ENCODE measurements at regions of chr1 and their contacts with region 1.

Region 1: DNA sequence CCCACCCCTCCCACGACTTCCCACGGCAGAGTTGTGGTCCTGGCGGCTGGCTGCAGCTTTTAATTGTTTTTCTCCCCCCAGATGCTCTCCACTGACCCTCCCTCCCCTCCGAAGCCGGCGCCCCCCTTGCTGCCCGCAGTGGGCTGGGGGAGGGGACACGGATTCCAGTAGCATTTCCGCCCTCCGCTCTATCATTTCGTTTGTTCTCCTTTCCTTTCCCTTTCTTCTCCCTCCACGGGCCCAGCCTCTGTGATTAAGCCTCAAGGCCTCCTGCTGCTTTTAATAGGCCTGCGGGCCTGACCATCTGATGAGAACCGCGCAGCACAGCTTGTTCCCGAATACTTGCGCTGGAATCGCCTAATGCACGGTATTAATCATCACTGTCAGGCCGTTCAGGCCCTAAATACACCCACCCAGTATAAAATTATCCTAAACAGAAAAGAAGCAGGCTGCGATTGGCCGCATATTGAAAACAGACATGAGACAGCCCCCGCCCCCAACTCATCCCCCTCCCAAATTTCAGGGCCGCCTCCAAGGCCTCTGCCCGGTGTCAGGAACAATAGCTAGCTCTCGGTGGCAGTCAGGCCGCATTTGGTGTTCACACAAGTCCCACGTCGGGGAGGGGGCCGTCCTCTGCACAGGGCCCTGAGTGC is 102.0 kb upstream of the ARHGEF16 start:
- DNase-seq: peak; percentile 71 to 95
- H3K4me3 ChIP-seq: peak overlapping the region; percentile 36 to 40
- H3K27ac ChIP-seq: peak overlapping the region; percentile 89 to 98
- H3K4me1 ChIP-seq: peaks cover 70 to 95% of the 10 kb centered on the region in 2 donors
- H3K27me3 ChIP-seq: no peaks in the 10 kb centered on the region
- CTCF ChIP-seq: no peak

Region 2: DNA sequence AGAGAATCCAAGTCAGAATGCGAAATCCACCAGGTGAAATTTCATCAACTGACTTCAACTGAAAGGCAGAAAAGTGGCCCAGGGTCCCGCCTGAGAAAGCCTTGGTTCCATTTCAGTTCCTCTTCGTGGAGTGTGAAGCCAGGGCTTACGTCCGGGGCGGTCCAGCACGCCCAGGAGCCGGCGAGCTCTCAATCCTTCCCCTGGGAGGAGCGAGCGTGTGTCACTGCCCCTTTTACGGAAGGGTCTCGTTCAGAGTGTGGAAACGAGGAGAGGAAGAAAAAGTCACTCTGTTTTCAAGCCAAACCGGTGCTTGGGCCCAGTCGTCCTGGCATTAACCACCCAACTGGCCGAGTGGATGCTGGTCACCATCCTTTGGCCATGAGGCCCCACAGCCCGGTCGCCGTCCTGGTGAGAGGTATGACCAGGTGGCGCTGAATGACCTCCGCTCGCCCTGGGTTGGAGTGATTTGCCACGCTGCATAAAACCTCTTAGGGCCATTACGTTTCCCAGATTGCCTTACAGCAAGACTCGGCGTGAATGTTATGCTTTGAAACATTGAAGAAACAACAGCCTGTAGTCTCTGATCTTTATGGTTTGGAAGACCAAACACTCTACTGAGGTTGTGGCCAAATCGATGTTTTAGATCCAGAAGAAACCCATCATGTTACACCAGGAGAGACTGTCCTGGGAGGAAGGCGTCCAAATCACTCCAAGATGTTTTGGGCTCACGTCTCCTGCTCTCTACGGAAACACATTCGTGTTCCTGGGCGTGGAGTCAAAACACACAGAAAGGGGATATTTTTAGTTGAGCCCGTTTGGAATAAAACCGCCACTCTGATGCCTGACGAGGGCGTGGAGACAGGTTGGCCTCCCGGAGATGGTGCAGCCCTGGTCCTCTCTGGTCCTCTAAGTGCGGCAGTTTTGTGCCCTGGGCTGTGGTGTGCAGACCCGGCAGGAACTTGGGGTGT is 424.7 kb before region 1 on chr1:
- intact Hi-C with region 1: loop called (anchors 5 kb)
- DNase-seq: peak; percentile 65 to 87
- H3K4me3 ChIP-seq: peak overlapping the region in 1 of 2 donors; percentile 45
- H3K27ac ChIP-seq: peak overlapping the region; percentile 92 to 95
- H3K4me1 ChIP-seq: peaks cover 12 to 34% of the 10 kb centered on the region in 2 donors
- H3K27me3 ChIP-seq: no peaks in the 10 kb centered on the region
- CTCF ChIP-seq: no peak

Region 3: DNA sequence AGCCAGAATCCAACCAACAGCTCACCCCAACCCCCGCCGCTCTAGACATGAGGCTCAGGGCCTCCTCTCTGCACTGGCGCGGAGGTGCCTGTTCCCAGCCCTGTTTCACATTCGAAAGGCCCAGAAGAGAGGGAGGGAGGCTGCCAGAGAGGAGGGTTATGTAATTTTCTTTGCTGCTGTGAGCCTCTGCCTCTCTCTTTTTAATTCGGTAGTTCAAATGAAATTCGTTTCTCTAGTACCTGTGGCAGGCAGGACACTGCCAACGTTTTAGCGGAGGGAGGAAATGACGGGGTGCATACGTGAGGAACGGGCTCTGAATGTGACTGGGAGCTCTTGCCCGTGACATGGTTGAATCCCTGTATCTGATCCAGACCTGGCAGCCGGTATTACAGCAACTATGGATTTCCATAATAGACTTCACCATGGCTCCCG is 274.0 kb before region 1 on chr1:
- intact Hi-C with region 1: no loop called
- DNase-seq: no peak
- H3K4me3 ChIP-seq: peak overlapping the region; percentile 35 to 37
- H3K27ac ChIP-seq: peak overlapping the region; percentile 99 to 100
- H3K4me1 ChIP-seq: peaks cover 36 to 72% of the 10 kb centered on the region in 2 donors
- H3K27me3 ChIP-seq: no peaks in the 10 kb centered on the region
- CTCF ChIP-seq: no peak

Region 4: DNA sequence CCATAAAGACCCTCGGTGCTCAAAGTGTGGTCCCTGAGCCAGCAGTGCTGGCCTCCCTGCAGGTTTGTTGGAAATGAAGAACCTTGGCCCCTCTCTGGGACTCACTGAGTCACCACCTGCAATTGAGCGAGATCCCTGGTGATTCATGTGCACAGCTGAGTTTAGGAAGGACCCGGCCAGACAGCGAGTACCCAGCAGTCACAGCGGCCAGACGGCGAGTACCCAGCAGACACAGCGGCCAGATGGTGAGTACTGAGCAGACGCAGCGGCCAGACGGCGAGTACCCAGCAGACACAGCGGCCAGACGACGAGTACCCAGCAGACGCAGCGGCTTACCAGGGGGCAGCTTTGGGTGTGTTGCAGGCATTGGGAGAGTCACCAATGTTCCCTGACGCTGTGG is 159.6 kb before region 1 on chr1:
- intact Hi-C with region 1: loop called (anchors 5 kb)
- DNase-seq: peak; percentile 55 to 92
- H3K4me3 ChIP-seq: no peak overlapping the region
- H3K27ac ChIP-seq: peak overlapping the region; percentile 99
- H3K4me1 ChIP-seq: peaks cover 44 to 91% of the 10 kb centered on the region in 2 donors
- H3K27me3 ChIP-seq: no peaks in the 10 kb centered on the region
- CTCF ChIP-seq: no peak

Region 5: DNA sequence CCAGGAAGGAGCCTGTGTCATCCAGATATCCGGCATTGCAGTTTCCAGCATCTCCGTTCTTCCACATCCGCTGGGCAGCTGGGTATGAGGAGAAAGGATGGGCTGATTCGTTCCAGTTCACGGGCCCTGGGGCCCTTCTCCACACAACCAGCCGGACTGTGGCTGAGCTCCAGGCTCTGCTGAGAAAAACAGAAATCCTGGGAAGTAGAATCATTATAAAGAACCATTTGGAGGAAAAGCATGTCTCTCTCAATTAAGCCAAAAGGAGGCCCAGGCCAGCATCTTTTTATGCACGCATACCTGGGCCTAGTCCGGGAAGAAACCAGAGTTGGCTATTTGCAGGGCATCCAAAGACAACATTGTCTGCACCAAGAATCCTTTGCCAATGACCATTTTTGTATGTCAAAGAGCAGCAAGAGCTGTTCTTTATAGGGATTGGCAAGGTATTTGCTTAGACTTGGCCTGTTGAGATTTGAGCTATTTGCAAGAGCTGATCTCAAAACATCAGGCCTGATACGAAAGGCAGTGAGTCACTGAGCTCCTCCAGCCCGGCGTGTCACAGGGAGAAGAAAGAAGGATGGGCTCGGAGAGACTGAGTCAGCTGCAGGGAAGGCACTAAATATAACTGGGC is 17.1 kb after region 1 on chr1:
- intact Hi-C with region 1: loop called (anchors 1 kb)
- DNase-seq: peak; percentile 79 to 96
- H3K4me3 ChIP-seq: peak overlapping the region in 1 of 2 donors; percentile 21
- H3K27ac ChIP-seq: peak overlapping the region; percentile 95 to 97
- H3K4me1 ChIP-seq: peaks cover 47 to 86% of the 10 kb centered on the region in 2 donors
- H3K27me3 ChIP-seq: no peaks in the 10 kb centered on the region
- CTCF ChIP-seq: no peak

Region 6: GRCh38 chr1:3423245-3423829 is 70.9 kb after region 1 on chr1:
- intact Hi-C with region 1: loop called (anchors 2 kb)
- DNase-seq: peak; percentile 77 to 87
- H3K4me3 ChIP-seq: no peak overlapping the region
- H3K27ac ChIP-seq: peak overlapping the region; percentile 77 to 92
- H3K4me1 ChIP-seq: peaks cover 6 to 43% of the 10 kb centered on the region in 2 donors
- H3K27me3 ChIP-seq: no peaks in the 10 kb centered on the region
- CTCF ChIP-seq: no peak

Measured in ascending aorta (tissue), 2 donors.